Activated CD8-positive, alpha-beta T cell treated with anti-CD3 and anti-CD28 coated beads, Interleukin-2, amount 10 ng/mL, durations not matched to agents 7 days and 5 days (primary cell): ENCODE measurements at regions of chr5 and their contacts with region 1.

Region 1: DNA sequence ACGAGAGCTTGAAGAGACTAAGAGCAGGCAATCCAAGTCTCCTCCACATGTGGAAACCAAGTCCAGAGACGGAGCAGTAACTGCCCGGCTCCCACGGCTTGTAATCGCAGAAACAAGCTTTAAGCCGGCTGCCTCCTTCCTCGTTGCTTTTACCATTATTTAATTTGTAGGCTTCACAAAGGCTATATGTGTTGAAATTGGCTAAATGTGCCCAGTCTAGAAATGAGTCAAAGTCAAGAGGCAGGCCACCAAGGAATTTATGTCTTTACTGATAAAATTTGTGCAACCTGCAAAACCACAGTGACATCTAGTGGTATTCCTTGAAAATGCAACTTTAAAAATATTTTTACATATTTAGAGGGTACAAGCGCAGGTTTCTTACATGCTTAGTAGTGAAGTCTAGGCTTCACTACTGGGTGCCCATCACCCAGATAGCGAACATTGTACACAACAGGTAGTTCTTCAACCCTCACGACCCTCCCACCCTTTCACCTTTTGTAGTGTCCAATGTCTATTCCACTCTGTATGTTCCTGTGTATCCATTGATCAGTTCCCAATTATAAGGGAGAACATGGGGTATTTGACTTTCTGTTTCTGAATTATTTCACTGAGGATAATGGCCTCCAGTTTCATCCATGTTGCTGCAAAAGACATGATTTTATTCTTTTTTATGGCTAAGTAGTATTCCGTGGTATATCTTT is 33.5 kb upstream of the EBF1 start:
- DNase-seq: no peak
- ATAC-seq: peak; percentile 49
- H3K4me3 Mint-ChIP-seq: no peak overlapping the region
- H3K27ac Mint-ChIP-seq: no peak overlapping the region
- H3K4me1 Mint-ChIP-seq: no peaks in the 10 kb centered on the region
- H3K27me3 Mint-ChIP-seq: peaks cover 7% of the 10 kb centered on the region

Region 2: GRCh38 chr5:158074992-158075769 is 1058.0 kb before region 1 on chr5:
- CTCF ChIA-PET with region 1: interaction called, 16 read pairs
- POLR2A ChIA-PET with region 1: no interaction called
- DNase-seq: peak; percentile 63
- ATAC-seq: peak; percentile 81
- H3K4me3 Mint-ChIP-seq: no peak overlapping the region
- H3K27ac Mint-ChIP-seq: no peak overlapping the region
- H3K4me1 Mint-ChIP-seq: no peaks in the 10 kb centered on the region
- H3K27me3 Mint-ChIP-seq: peaks cover 10% of the 10 kb centered on the region

Region 3: GRCh38 chr5:158174918-158175851 is 958.0 kb before region 1 on chr5:
- CTCF ChIA-PET with region 1: interaction called, 13 read pairs
- POLR2A ChIA-PET with region 1: no interaction called
- DNase-seq: peak; percentile 69
- ATAC-seq: peak; percentile 64
- H3K4me3 Mint-ChIP-seq: no peak overlapping the region
- H3K27ac Mint-ChIP-seq: no peak overlapping the region
- H3K4me1 Mint-ChIP-seq: no peaks in the 10 kb centered on the region
- H3K27me3 Mint-ChIP-seq: no peaks in the 10 kb centered on the region

Region 4: DNA sequence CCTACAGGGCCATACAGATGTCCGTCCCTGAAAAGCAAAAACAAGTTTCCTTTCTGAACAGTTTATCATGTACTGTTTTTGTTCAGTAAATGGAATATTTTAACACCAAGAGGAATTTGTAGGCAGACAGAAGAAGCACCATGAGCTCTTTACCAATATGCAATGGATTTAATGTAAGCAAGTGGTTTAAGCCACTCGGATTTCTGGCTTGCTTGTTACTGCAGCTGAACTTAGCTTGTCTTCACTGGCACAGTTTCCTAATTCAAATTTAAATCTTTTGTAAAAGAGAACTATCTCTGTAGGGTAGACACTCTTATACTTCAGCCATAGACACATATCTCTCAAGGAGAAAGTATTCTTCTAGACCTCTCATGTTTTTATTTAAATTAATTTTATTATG is 20.8 kb before region 1 on chr5:
- CTCF ChIA-PET with region 1: interaction called, 30 read pairs
- POLR2A ChIA-PET with region 1: no interaction called
- DNase-seq: no peak
- ATAC-seq: no peak
- H3K4me3 Mint-ChIP-seq: no peak overlapping the region
- H3K27ac Mint-ChIP-seq: no peak overlapping the region
- H3K4me1 Mint-ChIP-seq: no peaks in the 10 kb centered on the region
- H3K27me3 Mint-ChIP-seq: peaks cover 25% of the 10 kb centered on the region

Region 5: DNA sequence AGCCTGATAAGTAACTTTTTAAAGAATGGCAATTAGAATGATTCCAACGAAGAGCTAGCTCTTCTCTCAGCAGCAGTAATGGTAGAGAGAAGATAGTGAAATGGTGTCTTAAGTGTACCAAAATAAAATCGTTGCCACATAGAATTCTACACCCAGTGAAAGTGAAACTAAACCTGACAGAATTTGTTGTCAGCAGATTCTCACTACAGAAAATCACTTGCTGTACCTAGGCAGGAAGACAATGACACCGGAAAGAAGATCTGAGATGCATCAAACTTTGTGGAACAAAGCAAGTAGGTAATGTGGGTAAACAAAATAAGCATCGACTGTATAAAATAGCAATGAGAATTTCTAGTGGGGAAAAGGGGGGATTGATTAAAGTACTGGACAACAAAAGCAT is 12.7 kb before region 1 on chr5:
- CTCF ChIA-PET with region 1: interaction called, 12 read pairs
- POLR2A ChIA-PET with region 1: no interaction called
- DNase-seq: no peak
- ATAC-seq: peak; percentile 93
- H3K4me3 Mint-ChIP-seq: peak overlapping the region; percentile 58
- H3K27ac Mint-ChIP-seq: peak overlapping the region; percentile 87
- H3K4me1 Mint-ChIP-seq: peaks cover 18% of the 10 kb centered on the region
- H3K27me3 Mint-ChIP-seq: no peaks in the 10 kb centered on the region